H1 (cell line): ENCODE measurements at regions of chr19 and their contacts with region 1.

Region 1: GRCh38 chr19:18846862-18847548 is 15.2 kb downstream of the UPF1 start:
- DNase-seq: peak in 1 of 2 experiments; percentile 86
- H3K4me3 ChIP-seq: no peak overlapping the region
- H3K27ac ChIP-seq: no peak overlapping the region
- H3K4me1 ChIP-seq: no peaks in the 10 kb centered on the region
- H3K27me3 ChIP-seq: no peaks in the 10 kb centered on the region
- CTCF ChIP-seq: peak; percentile 95 to 99 (median 96)
- EP300 ChIP-seq: no peak
- POLR2A ChIP-seq: no peak
- RAD21 ChIP-seq: peak; percentile 95 to 96

Region 2: GRCh38 chr19:18762125-18763023 is 84.6 kb before region 1 on chr19:
- CTCF ChIA-PET with region 1: interaction called, 26 read pairs
- POLR2A ChIA-PET with region 1: no interaction called
- DNase-seq: no peak
- H3K4me3 ChIP-seq: no peak overlapping the region
- H3K27ac ChIP-seq: no peak overlapping the region
- H3K4me1 ChIP-seq: peaks cover 0 to 6% (median 1%) of the 10 kb centered on the region in 4 experiments; a peak in 3 of 7 replicates
- H3K27me3 ChIP-seq: peaks cover 2 to 30% (median 23%) of the 10 kb centered on the region in 4 experiments; a peak in 5 of 7 replicates
- CTCF ChIP-seq: no peak
- EP300 ChIP-seq: no peak
- POLR2A ChIP-seq: no peak
- RAD21 ChIP-seq: no peak; a peak in 1 of 4 replicates

Region 3: DNA sequence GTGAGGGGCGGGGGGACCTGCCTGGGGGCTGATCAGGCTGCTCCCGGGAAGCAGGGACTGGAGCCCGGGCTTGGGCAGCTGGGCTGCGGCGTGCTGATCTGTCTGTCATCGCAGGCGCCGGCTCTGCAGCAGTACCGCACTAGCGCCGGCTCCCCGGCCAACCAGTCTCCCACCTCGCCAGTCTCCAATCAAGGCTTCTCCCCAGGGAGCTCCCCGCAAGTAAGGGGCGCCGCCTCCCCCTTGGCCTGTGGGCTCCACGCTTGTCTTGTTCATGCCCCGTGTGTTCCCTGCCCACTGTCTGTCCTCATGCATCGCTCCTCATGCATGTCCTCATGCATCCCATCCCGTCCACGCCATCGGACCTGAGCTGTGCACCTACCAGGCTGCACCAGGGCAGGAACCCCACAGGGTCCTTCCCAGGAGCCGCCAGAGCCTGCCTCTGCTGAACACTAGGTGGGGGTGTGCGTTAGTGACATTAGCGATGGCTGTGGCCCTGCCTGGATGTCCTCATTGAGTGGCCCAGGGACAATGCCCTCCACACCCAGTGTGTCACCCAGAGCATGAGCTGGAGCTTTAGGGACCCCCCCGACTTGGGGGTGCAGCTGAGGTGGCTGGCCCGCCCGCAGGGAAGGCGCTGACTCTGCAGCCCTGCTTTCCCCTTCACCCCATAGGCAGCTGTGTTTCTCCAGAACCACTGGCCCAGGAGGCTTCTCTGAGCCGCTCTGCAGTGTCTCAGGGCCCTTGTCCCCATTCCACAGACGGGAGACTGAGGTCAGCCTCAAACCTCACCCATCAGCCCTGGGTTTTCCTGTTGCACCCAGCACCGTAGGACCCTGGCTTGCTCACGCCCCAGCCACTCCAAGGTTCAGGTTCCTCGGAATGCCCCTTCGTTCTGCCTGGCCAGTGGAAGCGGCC is 75.4 kb before region 1 on chr19:
- CTCF ChIA-PET with region 1: interaction called, 132 read pairs
- POLR2A ChIA-PET with region 1: interaction called, 5 read pairs
- DNase-seq: no peak
- H3K4me3 ChIP-seq: no peak overlapping the region
- H3K27ac ChIP-seq: no peak overlapping the region
- H3K4me1 ChIP-seq: peaks cover 0 to 6% (median 2%) of the 10 kb centered on the region in 4 experiments; a peak in 2 of 7 replicates
- H3K27me3 ChIP-seq: peaks cover 7 to 68% (median 52%) of the 10 kb centered on the region in 4 experiments
- CTCF ChIP-seq: peak; percentile 58 to 74 (median 68)
- EP300 ChIP-seq: no peak
- POLR2A ChIP-seq: no peak
- RAD21 ChIP-seq: peak; percentile 55 to 73; a peak in 3 of 4 replicates

Region 4: GRCh38 chr19:18785179-18786128 is 61.6 kb before region 1 on chr19:
- CTCF ChIA-PET with region 1: interaction called, 132 read pairs
- POLR2A ChIA-PET with region 1: interaction called, 3 read pairs
- DNase-seq: peak in 1 of 2 experiments; percentile 98
- H3K4me3 ChIP-seq: peak overlapping the region in 3 of 4 experiments; percentile 26 to 52 (median 32); a peak in 6 of 8 replicates
- H3K27ac ChIP-seq: no peak overlapping the region
- H3K4me1 ChIP-seq: peaks cover 3 to 31% (median 19%) of the 10 kb centered on the region in 4 experiments
- H3K27me3 ChIP-seq: peaks cover 61 to 97% (median 93%) of the 10 kb centered on the region in 4 experiments
- CTCF ChIP-seq: no peak
- EP300 ChIP-seq: no peak
- POLR2A ChIP-seq: no peak
- RAD21 ChIP-seq: no peak

Region 5: DNA sequence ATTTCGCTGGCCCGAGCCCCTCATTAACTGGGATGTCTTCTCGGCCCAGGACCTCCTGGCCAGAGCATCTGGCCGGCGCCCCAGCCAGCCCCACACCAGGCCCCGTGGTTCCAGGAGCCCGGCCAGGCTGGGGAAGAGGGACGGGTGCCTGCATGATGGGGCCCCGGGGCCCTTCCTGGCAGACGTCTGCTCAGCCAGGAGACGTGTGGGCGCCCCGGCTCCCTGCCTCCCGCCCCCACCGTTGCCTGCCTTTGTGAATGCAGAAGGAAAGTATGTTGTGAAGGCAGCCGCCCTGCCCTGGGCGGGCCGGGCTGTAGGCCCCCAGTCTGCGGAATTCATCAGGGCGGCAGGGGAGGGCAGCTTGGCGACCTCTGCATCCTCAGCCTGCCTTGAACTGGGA is 51.5 kb before region 1 on chr19:
- CTCF ChIA-PET with region 1: interaction called, 22 read pairs
- POLR2A ChIA-PET with region 1: interaction called, 3 read pairs
- DNase-seq: no peak
- H3K4me3 ChIP-seq: no peak overlapping the region
- H3K27ac ChIP-seq: no peak overlapping the region
- H3K4me1 ChIP-seq: peaks cover 0 to 8% (median 2%) of the 10 kb centered on the region in 4 experiments; a peak in 3 of 7 replicates
- H3K27me3 ChIP-seq: peaks cover 34 to 74% (median 62%) of the 10 kb centered on the region in 4 experiments
- CTCF ChIP-seq: no peak
- EP300 ChIP-seq: no peak
- POLR2A ChIP-seq: no peak
- RAD21 ChIP-seq: no peak

Region 6: DNA sequence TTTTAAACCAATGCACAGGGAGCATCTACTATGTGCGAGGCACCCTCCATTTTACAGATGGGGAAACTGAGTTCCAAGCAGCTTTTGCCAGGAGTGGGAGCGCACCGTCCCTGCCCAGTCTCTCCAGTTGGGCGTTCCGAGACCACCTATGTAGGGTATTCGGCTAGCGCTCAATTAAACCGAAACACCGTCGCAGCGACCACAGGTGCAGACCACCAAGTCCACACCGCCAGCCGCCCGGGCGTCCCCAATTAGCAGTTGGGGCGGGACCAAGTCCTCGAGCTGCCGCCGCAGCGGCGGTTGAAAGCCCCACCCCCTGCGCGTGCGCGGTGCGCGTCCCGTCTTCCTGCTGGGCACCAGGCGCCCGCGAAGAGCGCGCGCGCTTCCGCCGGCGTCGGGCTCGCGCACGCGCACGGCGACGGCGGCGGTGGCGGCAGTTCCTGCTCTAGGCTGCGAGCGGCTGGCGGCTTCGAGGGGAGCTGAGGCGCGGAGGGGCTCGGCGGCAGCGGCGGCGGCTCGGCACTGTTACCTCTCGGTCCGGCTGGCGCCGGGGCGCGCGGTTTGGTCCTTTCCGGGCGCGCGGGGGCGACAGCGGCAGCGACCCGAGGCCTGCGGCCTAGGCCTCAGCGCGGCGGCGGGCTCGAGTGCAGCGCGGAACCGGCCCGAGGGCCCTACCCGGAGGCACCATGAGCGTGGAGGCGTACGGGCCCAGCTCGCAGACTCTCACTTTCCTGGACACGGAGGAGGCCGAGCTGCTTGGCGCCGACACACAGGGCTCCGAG is 15.3 kb before region 1 on chr19 and contains the start of gene UPF1:
- CTCF ChIA-PET with region 1: interaction called, 79 read pairs
- POLR2A ChIA-PET with region 1: interaction called, 18 read pairs
- DNase-seq: peak; percentile 70 to 97
- H3K4me3 ChIP-seq: peak within 1 kb of the TSS; percentile 80 to 99 (median 84)
- H3K27ac ChIP-seq: peak within 1 kb of the TSS; percentile 62; the same call in 1 of the 2 replicates
- H3K4me1 ChIP-seq: peaks cover 3 to 15% (median 10%) of the 10 kb centered on the region in 4 experiments
- H3K27me3 ChIP-seq: peaks cover 0 to 6% (median 0%) of the 10 kb centered on the region in 4 experiments; a peak in 2 of 7 replicates
- CTCF ChIP-seq: 0 out of 4 replicates have a peak, but pooled peaks of 1 of the 3 experiments have one; percentile 10
- EP300 ChIP-seq: peak in 1 of 2 experiments; percentile 13; a peak in 1 of 3 replicates
- POLR2A ChIP-seq: peak; percentile 81 to 82
- RAD21 ChIP-seq: 0 out of 4 replicates have a peak, but pooled peaks of 1 of the 2 experiments have one; percentile 3
- total RNA-seq, gene UPF1: 62.0 and 64.6 TPM in 2 replicates

Region 7: DNA sequence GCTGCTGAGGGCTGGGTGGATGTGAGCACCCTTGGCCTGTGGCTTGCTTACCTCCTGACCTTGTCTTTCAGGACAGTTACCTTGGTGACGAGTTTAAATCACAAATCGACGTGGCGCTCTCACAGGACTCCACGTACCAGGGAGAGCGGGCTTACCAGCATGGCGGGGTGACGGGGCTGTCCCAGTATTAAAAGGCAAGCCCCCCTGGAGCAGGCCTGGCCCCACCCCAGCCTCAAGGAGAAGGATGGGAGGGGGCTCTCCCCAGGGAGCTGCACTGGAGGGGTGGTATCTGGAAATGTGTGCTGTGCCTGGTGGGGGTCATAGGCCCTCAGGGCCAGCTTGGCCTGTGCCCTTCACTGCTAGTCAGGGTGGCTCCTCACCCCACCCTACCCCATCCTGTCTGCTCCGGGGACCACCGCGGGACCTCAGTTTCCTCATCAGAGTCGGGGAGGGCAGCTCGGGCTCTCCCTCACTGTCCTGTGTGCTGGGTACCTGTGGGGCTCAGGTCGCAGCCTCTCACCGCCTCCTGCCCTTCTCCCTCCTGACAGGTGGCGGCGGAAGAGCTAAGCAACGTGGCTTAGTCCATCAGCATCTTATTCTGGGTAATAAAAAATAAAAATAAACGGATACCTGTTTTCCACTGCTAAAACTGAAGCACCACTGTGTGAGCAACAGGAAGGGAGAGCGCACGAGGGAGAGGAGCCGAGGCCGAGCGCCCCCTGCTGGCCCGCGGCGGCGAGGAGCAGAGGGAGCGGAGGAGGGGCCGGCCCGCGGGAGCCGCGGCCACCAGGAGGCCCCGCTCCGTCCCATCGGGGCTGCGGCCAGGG is 19.2 kb after region 1 on chr19:
- CTCF ChIA-PET with region 1: interaction called, 247 read pairs
- POLR2A ChIA-PET with region 1: interaction called, 4 read pairs
- DNase-seq: peak in 1 of 2 experiments; percentile 96
- H3K4me3 ChIP-seq: no peak overlapping the region
- H3K27ac ChIP-seq: peak overlapping the region; percentile 35; the same call in 1 of the 2 replicates
- H3K4me1 ChIP-seq: peaks cover 0 to 13% (median 4%) of the 10 kb centered on the region in 4 experiments; a peak in 4 of 7 replicates
- H3K27me3 ChIP-seq: peaks cover 0 to 2% (median 0%) of the 10 kb centered on the region in 4 experiments; a peak in 1 of 7 replicates
- CTCF ChIP-seq: peak; percentile 92 to 99 (median 96)
- EP300 ChIP-seq: no peak
- POLR2A ChIP-seq: no peak
- RAD21 ChIP-seq: peak; percentile 60 to 73

Region 8: DNA sequence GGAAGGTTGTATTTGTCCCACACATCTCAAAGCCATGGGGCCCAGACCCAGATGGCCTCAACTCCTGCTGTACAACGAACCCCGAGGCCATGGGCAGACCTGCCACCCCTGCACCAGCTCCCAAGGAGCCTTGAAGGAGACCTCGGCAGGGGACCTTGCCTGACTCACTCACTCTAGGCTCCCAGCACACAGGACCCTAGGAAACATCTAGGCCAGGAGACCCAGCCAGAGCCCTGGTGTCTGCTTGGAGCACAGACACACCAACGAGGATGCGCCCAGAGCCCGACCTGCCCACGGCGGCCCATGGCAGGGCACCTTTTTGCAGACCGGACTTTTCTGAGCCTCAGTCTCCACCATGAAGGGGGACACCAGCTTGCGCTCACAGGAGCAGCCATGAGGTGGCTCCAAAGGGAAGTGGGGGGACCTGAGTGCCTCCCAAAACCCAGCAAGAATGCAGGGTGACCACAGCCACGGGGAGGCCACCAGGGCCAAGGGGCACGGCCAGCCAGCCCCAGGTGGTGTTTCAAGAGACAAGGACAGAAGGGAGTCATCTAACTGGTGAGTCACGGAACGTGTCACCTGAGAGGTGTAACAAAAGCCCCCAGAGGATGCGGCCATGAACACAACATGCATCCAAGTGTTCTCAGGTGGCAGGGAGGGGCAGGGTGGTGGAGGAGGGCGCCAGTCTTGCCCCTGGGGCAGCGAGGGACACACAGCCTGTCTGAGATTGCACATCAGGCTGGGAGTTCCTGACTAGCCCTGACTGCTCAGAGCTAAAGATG is 53.9 kb after region 1 on chr19:
- CTCF ChIA-PET with region 1: no interaction called
- POLR2A ChIA-PET with region 1: no interaction called
- DNase-seq: no peak
- H3K4me3 ChIP-seq: no peak overlapping the region
- H3K27ac ChIP-seq: no peak overlapping the region
- H3K4me1 ChIP-seq: peaks cover 0 to 5% (median 0%) of the 10 kb centered on the region in 4 experiments; a peak in 1 of 7 replicates
- H3K27me3 ChIP-seq: peaks cover 0 to 10% (median 7%) of the 10 kb centered on the region in 4 experiments; a peak in 4 of 7 replicates
- CTCF ChIP-seq: no peak
- EP300 ChIP-seq: no peak
- POLR2A ChIP-seq: no peak
- RAD21 ChIP-seq: no peak